ENCODE measurements at regions of chr2 and their contacts with region 1.

Region 1: GRCh38 chr2:55168221-55169154 is 63.6 kb downstream of the CLHC1 start:
- DNase-seq: peak in 2 of 4 donors; percentile 55 to 75
- ATAC-seq: peak; percentile 72
- H3K4me3 ChIP-seq: no peak overlapping the region
- H3K27ac ChIP-seq: peak overlapping the region; percentile 49 to 54
- H3K4me1 ChIP-seq: peaks cover 26 to 39% of the 10 kb centered on the region in 2 donors
- H3K27me3 ChIP-seq: no peaks in the 10 kb centered on the region
- CTCF ChIP-seq: peak; percentile 59 to 78

Region 2: GRCh38 chr2:55010149-55010591 is 158.3 kb before region 1 on chr2:
- intact Hi-C with region 1: loop called in 1 of 2 experiments (anchors 10 kb)
- DNase-seq: peak in 2 of 4 donors; percentile 64 to 78
- ATAC-seq: peak; percentile 88
- H3K4me3 ChIP-seq: peak overlapping the region; percentile 27 to 30
- H3K27ac ChIP-seq: peak overlapping the region; percentile 74 to 76
- H3K4me1 ChIP-seq: peaks cover 35 to 90% of the 10 kb centered on the region in 2 donors
- H3K27me3 ChIP-seq: no peaks in the 10 kb centered on the region
- CTCF ChIP-seq: no peak

Region 3: DNA sequence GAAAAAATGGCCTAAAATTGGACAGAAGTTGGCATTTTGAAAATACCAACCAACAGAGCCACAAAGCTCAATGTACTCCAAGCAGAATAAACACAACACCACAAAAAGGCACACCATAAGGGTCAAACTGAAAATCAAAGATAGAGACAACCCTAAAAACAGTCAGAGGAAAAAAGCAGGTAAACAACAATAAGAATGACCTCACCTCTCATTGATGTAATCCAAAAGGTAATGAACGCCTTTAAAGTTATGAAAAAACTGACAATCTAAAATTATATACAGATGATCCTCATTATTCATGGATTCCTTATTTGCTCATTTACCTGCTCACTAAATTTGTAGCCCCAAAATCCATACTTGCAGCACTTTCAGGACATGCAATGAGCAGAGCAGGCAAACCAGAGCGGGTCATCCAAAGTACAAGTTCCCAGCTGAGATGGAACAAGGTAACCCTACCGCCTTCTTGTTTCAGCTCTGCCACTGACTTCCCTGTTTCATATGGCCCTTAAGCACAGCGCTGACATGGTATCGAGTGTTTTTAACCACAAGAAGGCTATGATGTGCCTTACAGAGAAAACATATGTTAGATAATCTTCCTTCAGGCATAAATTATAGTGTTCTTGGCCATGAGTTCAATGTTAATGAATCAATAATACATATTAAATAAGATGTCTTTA is 135.3 kb before region 1 on chr2:
- intact Hi-C with region 1: no loop called
- DNase-seq: no peak
- ATAC-seq: peak; percentile 33
- H3K4me3 ChIP-seq: no peak overlapping the region
- H3K27ac ChIP-seq: peak overlapping the region in 1 of 2 donors; percentile 26
- H3K4me1 ChIP-seq: peaks cover 0 to 79% of the 10 kb centered on the region in 2 donors
- H3K27me3 ChIP-seq: no peaks in the 10 kb centered on the region
- CTCF ChIP-seq: no peak

Region 4: DNA sequence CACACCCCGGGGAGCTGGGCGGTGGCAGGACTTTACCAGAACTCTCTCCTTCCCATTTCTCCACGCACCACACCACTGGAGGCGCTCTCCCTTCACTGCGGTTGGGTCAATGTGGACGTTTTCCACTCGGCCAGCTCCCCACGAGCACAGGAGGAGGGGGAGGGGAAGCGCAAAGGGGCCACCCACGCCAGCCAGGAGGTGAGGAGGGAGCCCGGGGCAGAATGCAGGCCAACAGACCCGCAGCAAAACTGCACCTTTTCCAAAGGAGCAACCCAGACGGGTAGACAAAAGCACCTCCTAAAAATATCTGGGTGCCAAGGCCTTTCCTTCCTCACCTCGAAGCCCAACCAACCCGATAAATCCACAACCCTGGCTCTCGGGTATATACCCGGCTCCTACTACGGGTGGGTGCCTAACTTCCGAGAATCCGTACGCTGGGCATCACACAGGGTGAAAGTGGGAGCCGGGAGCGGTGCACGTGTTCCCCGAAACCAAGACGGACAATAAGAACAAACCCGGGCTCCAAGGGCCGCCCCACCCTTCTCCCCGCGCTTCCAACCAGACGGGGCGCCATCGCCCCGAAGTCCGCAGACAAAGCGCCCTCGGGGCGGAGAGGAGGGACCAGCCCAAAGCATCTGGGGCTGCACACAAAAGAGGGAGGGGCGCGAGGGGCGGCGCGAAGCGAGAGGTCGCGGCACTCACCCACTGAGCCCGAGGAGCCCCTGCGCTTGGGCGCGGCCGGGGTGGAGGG is 119.3 kb before region 1 on chr2:
- intact Hi-C with region 1: loop called in 1 of 2 experiments (anchors 10 kb)
- DNase-seq: peak; percentile 75 to 93 (median 92)
- ATAC-seq: peak; percentile 65
- H3K4me3 ChIP-seq: peak overlapping the region; percentile 86 to 91
- H3K27ac ChIP-seq: peak overlapping the region; percentile 99
- H3K4me1 ChIP-seq: peaks cover 36 to 59% of the 10 kb centered on the region in 2 donors
- H3K27me3 ChIP-seq: no peaks in the 10 kb centered on the region
- CTCF ChIP-seq: peak; percentile 47 to 57

Region 5: GRCh38 chr2:55111570-55112228 is 56.8 kb before region 1 on chr2:
- intact Hi-C with region 1: no loop called
- DNase-seq: peak in 2 of 4 donors; percentile 86
- ATAC-seq: peak; percentile 65
- H3K4me3 ChIP-seq: no peak overlapping the region
- H3K27ac ChIP-seq: peak overlapping the region; percentile 80 to 93
- H3K4me1 ChIP-seq: peaks cover 15 to 38% of the 10 kb centered on the region in 2 donors
- H3K27me3 ChIP-seq: no peaks in the 10 kb centered on the region
- CTCF ChIP-seq: no peak

Measured in left lung (tissue), 14 donors.